Pancreas (tissue), 10 donors: ENCODE measurements at regions of chr21 and their contacts with region 1.

Region 1: DNA sequence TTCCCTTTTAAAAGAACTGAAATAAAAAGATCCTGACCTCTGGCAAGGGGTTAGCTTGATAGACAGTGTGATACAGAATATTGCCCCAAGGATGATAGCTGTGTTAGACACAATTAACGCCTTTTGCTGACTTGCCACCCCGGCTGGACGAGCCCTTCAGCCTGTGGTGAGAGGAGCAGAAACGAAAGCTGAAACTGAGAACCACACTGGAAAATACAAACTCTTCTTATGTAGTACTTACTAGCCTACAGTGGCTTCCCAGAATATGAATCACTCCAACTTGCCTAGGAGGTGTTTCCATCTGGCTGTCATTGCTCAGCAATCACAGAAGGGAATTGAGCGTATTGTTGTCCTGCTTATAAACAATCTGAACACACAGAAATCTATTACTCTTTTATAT is 22.9 kb downstream of the SAMSN1 start:
- DNase-seq: no peak
- ATAC-seq: peak in 2 of 4 donors; percentile 64 to 78
- H3K4me3 ChIP-seq: no peak overlapping the region
- H3K27ac ChIP-seq: no peak overlapping the region
- H3K4me1 ChIP-seq: no peaks in the 10 kb centered on the region
- H3K27me3 ChIP-seq: no peaks in the 10 kb centered on the region
- CTCF ChIP-seq: no peak

Region 2: GRCh38 chr21:14469641-14470040 is 53.6 kb before region 1 on chr21:
- intact Hi-C with region 1: loop called in 1 of 3 experiments (anchors 10 kb)
- DNase-seq: no peak
- ATAC-seq: no peak
- H3K4me3 ChIP-seq: no peak overlapping the region
- H3K27ac ChIP-seq: no peak overlapping the region
- H3K4me1 ChIP-seq: no peaks in the 10 kb centered on the region
- H3K27me3 ChIP-seq: no peaks in the 10 kb centered on the region
- CTCF ChIP-seq: no peak

Region 3: GRCh38 chr21:14499316-14499715 is 23.9 kb before region 1 on chr21:
- intact Hi-C with region 1: no loop called
- DNase-seq: no peak
- ATAC-seq: no peak
- H3K4me3 ChIP-seq: no peak overlapping the region
- H3K27ac ChIP-seq: no peak overlapping the region
- H3K4me1 ChIP-seq: no peaks in the 10 kb centered on the region
- H3K27me3 ChIP-seq: no peaks in the 10 kb centered on the region
- CTCF ChIP-seq: no peak